ENCODE measurements at regions of chr19 and their contacts with region 1.

Region 1: GRCh38 chr19:15379083-15379995 is at the start of gene AKAP8:
- DNase-seq: peak; percentile 96 to 99 (median 98)
- H3K4me3 ChIP-seq: peak within 1 kb of the TSS; percentile 100
- H3K4me3 Mint-ChIP-seq: peak within 1 kb of the TSS; percentile 92 to 100 (median 100)
- H3K27ac ChIP-seq: peak within 1 kb of the TSS; percentile 97
- H3K27ac Mint-ChIP-seq: peak within 1 kb of the TSS; percentile 86 to 100 (median 100)
- H3K4me1 ChIP-seq: peaks cover 28% of the 10 kb centered on the region
- H3K4me1 Mint-ChIP-seq: peaks cover 29 to 49% (median 40%) of the 10 kb centered on the region in 3 donors
- H3K27me3 ChIP-seq: no peaks in the 10 kb centered on the region
- H3K27me3 Mint-ChIP-seq: peaks cover 0 to 1% of the 10 kb centered on the region in 2 donors
- total RNA-seq, gene AKAP8: 48.6 to 59.8 TPM

Region 2: DNA sequence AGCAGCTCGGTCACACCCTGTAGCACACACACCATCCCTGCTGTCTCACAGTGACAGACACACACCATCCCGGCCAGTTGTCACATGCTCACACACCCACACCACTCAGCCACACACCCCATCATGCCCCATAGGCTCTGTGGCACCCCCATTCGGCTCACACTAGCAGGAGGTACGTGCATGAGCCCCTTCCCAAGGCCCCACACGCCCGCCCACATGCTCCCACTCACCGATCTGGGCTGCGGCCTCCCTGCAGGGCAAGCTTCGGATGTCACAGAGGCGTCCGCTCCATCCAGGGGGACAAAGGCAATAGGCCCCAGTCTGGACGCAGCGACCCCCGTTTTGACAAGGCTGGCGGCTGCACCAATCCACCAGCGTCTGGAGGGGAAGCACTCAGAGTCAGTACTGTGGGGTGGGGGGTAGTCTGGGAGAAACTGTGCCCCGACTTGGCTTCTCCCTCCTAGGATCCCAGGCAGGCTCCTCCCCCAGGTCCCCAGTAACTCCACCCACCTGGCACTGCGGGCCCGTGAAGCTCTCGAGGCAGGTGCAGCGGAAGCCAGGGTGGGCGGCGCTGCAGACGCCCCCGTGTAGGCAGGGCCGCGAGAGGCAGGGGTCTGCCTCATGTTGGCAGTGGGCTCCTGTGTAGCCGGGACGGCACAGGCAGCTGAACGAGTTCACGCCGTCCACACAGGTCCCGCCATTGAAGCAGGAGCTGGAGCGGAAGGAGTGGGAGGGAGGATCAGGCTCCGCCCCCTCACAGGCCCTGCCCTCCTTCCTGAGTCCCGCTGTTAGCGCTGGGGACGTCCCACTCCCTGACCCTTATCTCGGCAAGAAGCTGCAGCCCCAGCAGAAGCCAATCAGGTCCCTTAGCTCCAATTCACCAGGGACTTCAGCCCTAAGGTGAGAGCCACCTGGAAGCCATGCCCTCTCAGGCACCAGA is 198.6 kb before region 1 on chr19:
- CTCF ChIA-PET with region 1: no interaction called
- POLR2A ChIA-PET with region 1: no interaction called
- DNase-seq: no peak
- H3K4me3 ChIP-seq: no peak overlapping the region
- H3K4me3 Mint-ChIP-seq: no peak overlapping the region
- H3K27ac ChIP-seq: no peak overlapping the region
- H3K27ac Mint-ChIP-seq: no peak overlapping the region
- H3K4me1 ChIP-seq: peaks cover 4% of the 10 kb centered on the region
- H3K4me1 Mint-ChIP-seq: peaks cover 4 to 5% (median 5%) of the 10 kb centered on the region in 3 donors
- H3K27me3 ChIP-seq: no peaks in the 10 kb centered on the region
- H3K27me3 Mint-ChIP-seq: peaks cover 7% of the 10 kb centered on the region in 2 donors

Region 3: DNA sequence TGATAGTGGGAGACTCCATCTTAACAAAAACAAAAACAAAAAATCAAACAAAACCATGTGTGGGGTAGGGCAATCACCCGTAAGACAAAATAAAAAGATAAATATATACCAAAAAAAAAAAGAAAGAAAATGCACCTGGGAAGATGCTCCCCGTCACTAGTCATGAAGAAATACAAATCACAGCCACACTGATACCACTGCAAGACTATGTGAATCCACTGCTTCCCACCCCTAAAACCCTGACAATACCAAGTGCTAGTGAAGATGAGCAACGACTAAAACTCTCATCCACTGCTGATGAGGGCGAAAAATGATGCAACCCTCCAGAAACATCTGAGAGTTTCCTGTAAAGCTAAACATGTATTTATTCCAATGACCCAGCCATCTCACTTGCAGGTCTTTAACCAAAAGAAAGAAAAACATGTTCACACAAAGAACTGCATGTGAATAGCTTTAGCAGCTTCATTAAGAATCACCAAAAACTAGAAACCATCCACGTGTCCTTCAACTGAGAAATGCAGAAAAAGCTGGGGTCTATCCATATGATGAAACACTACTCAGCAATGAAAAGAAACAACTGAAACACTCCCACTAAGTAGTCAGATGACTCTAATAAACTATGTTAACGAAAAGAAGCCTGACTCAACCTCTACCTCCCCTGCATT is 78.7 kb before region 1 on chr19:
- CTCF ChIA-PET with region 1: no interaction called
- POLR2A ChIA-PET with region 1: no interaction called
- DNase-seq: no peak
- H3K4me3 ChIP-seq: no peak overlapping the region
- H3K4me3 Mint-ChIP-seq: peak overlapping the region; percentile 10 to 75 (median 61)
- H3K27ac ChIP-seq: peak overlapping the region; percentile 5
- H3K27ac Mint-ChIP-seq: peak overlapping the region in 7 of 8 donors; percentile 45 to 71 (median 69)
- H3K4me1 ChIP-seq: peaks cover 90% of the 10 kb centered on the region
- H3K4me1 Mint-ChIP-seq: peaks cover 84 to 96% (median 92%) of the 10 kb centered on the region in 3 donors
- H3K27me3 ChIP-seq: no peaks in the 10 kb centered on the region
- H3K27me3 Mint-ChIP-seq: no peaks in the 10 kb centered on the region

Region 4: GRCh38 chr19:15332311-15332996 is 46.9 kb before region 1 on chr19 and contains the start of gene BRD4:
- CTCF ChIA-PET with region 1: interaction called, 5 read pairs
- POLR2A ChIA-PET with region 1: interaction called, 20 read pairs
- DNase-seq: peak; percentile 68 to 85 (median 72)
- H3K4me3 ChIP-seq: peak within 1 kb of the TSS; percentile 80
- H3K4me3 Mint-ChIP-seq: peak within 1 kb of the TSS; percentile 91 to 98 (median 97)
- H3K27ac ChIP-seq: peak within 1 kb of the TSS; percentile 80
- H3K27ac Mint-ChIP-seq: peak within 1 kb of the TSS; percentile 92 to 98 (median 96)
- H3K4me1 ChIP-seq: peaks cover 37% of the 10 kb centered on the region
- H3K4me1 Mint-ChIP-seq: peaks cover 38 to 54% (median 41%) of the 10 kb centered on the region in 3 donors
- H3K27me3 ChIP-seq: no peaks in the 10 kb centered on the region
- H3K27me3 Mint-ChIP-seq: peaks cover 0 to 4% of the 10 kb centered on the region in 2 donors
- total RNA-seq, gene BRD4: 101 to 109 TPM

Region 5: DNA sequence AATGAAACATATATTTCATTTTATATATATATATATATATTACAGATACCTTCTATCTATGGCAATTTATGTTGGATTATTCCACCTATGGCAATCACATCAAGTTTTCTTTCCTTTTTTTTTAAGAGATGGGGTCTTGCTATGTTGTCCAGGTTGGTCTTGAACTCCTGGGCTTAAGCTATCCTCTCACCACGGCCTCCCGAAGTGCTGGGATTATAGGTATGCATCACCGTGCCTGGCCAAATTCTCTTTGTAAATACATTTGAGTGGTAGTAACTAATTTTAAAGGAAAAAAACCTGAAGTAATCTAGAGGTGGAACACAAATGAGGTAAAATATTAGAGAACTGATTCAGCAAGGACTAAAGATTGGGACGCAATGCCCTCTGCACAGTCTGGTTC is 25.4 kb before region 1 on chr19:
- CTCF ChIA-PET with region 1: no interaction called
- POLR2A ChIA-PET with region 1: no interaction called
- DNase-seq: no peak
- H3K4me3 ChIP-seq: no peak overlapping the region
- H3K4me3 Mint-ChIP-seq: no peak overlapping the region
- H3K27ac ChIP-seq: no peak overlapping the region
- H3K27ac Mint-ChIP-seq: peak overlapping the region in 1 of 8 donors; percentile 50
- H3K4me1 ChIP-seq: no peaks in the 10 kb centered on the region
- H3K4me1 Mint-ChIP-seq: peaks cover 0 to 2% (median 0%) of the 10 kb centered on the region in 3 donors
- H3K27me3 ChIP-seq: no peaks in the 10 kb centered on the region
- H3K27me3 Mint-ChIP-seq: no peaks in the 10 kb centered on the region

Region 6: DNA sequence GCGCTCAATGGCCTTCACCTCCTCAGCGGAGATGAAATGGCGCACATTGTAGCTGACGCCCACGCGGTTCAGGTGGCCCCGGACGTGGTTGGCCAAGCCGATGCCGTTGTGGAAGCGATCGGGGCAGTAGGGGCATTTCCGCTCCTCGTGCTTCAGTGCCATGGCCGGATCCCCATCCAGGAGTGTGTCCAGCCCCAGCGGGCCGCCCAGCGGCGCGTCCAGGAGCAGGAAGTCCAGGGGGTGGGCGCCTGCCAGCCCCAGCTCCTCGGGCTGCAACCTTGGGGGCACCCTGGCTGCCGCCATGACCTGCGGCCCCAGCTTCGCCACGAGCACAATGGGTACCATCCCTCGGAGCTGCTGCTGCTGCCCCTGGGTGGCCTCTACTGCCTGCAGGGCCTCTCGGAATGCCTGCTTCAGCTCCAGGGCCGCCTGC is 59.3 kb after region 1 on chr19:
- CTCF ChIA-PET with region 1: no interaction called
- POLR2A ChIA-PET with region 1: no interaction called
- DNase-seq: no peak
- H3K4me3 ChIP-seq: no peak overlapping the region
- H3K4me3 Mint-ChIP-seq: no peak overlapping the region
- H3K27ac ChIP-seq: no peak overlapping the region
- H3K27ac Mint-ChIP-seq: no peak overlapping the region
- H3K4me1 ChIP-seq: peaks cover under 1% of the 10 kb centered on the region
- H3K4me1 Mint-ChIP-seq: peaks cover 0 to 2% (median 0%) of the 10 kb centered on the region in 3 donors
- H3K27me3 ChIP-seq: no peaks in the 10 kb centered on the region
- H3K27me3 Mint-ChIP-seq: no peaks in the 10 kb centered on the region

Measured in CD8-positive, alpha-beta memory T cell (primary cell).